MCF 10A (cell line): ENCODE measurements at regions of chr14 and their contacts with region 1.

Region 1: GRCh38 chr14:41606532-41607303 is at the start of gene LRFN5:
- DNase-seq: no peak
- H3K4me3 Mint-ChIP-seq: no peak within 1 kb of the TSS
- H3K27ac Mint-ChIP-seq: no peak within 1 kb of the TSS
- H3K4me1 Mint-ChIP-seq: no peaks in the 10 kb centered on the region
- H3K27me3 Mint-ChIP-seq: peaks cover 91% of the 10 kb centered on the region
- CTCF ChIP-seq: no peak
- total RNA-seq, gene LRFN5: not detected in 2 replicates

Region 2: DNA sequence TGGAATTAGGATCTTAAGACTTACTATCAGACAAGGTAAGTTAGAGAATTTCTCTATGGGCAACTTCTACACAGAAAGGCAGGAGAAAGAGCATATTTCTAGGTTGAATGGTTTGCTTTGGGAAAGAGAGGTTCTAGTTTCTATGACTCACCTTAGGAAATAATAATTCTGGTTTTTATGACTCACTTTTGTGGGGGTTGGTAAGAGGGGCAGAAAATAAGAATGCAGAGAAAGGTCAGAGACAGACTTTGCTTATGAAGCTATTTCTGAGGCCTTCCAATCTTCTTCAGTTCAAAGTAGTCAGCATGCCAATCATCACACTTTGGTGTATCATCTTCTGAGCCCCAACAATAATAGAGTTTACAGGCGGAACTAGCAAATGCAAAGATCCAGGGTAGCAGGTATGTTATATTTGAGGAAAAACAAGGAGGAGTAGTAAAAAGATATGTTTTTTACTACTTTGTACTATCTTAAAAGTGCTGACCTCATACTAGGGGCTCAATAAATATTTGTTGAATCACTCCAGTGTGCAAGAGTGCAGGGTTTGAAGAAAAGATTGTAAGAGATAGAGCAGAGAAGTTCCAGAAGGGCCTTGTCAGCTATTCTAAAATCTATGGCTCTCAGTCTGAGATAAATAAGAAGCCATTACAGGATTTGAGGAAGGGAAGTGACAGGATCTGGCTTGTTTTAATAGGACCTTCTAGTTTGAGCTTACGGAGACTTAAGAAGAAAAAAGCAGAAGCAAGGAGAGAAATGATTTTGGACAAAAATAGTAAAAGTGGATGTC is 56.7 kb before region 1 on chr14:
- CTCF ChIA-PET with region 1: no interaction called
- POLR2A ChIA-PET with region 1: no interaction called
- intact Hi-C with region 1: no loop called
- DNase-seq: peak; percentile 35
- H3K4me3 Mint-ChIP-seq: no peak overlapping the region
- H3K27ac Mint-ChIP-seq: no peak overlapping the region
- H3K4me1 Mint-ChIP-seq: no peaks in the 10 kb centered on the region
- H3K27me3 Mint-ChIP-seq: peaks cover 2% of the 10 kb centered on the region
- CTCF ChIP-seq: no peak

Region 3: GRCh38 chr14:41586237-41586636 is 20.5 kb before region 1 on chr14:
- CTCF ChIA-PET with region 1: interaction called, 18 read pairs
- POLR2A ChIA-PET with region 1: no interaction called
- intact Hi-C with region 1: no loop called
- DNase-seq: no peak
- H3K4me3 Mint-ChIP-seq: no peak overlapping the region
- H3K27ac Mint-ChIP-seq: no peak overlapping the region
- H3K4me1 Mint-ChIP-seq: no peaks in the 10 kb centered on the region
- H3K27me3 Mint-ChIP-seq: peaks cover 44% of the 10 kb centered on the region
- CTCF ChIP-seq: no peak

Region 4: DNA sequence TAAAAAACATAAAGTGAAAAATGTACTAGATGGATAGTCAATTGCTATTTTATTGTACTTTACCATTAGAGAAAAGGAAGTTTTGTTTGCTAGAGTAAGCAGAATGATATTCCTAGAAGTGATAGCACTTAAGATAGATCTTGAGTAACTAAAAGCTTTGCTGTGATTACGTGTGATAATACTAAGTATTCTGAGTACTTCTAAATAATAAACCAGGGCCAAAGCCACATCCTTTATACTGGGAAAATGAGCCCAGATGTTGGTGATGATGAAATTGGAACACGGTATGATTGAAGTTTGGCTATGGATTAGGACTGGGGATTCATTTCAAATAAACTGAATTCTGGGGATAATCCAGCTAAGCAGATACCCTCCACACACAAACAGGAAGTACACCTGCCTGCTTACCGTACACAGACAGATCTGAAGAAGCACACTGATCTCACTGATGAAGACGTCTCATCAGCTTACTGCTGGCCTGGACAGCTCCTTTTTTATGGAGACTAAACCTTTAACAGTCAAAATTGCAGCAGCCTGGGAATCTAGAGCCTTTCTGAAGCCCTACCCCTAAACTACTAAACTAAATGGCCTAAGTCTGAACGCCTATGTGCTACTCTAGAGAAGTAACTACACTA is 199.8 kb after region 1 on chr14:
- CTCF ChIA-PET with region 1: no interaction called
- POLR2A ChIA-PET with region 1: no interaction called
- intact Hi-C with region 1: no loop called
- DNase-seq: no peak
- H3K4me3 Mint-ChIP-seq: no peak overlapping the region
- H3K27ac Mint-ChIP-seq: no peak overlapping the region
- H3K4me1 Mint-ChIP-seq: no peaks in the 10 kb centered on the region
- H3K27me3 Mint-ChIP-seq: peaks cover 28% of the 10 kb centered on the region
- CTCF ChIP-seq: no peak